ENCODE measurements at regions of chr2 and their contacts with region 1.

Region 1: DNA sequence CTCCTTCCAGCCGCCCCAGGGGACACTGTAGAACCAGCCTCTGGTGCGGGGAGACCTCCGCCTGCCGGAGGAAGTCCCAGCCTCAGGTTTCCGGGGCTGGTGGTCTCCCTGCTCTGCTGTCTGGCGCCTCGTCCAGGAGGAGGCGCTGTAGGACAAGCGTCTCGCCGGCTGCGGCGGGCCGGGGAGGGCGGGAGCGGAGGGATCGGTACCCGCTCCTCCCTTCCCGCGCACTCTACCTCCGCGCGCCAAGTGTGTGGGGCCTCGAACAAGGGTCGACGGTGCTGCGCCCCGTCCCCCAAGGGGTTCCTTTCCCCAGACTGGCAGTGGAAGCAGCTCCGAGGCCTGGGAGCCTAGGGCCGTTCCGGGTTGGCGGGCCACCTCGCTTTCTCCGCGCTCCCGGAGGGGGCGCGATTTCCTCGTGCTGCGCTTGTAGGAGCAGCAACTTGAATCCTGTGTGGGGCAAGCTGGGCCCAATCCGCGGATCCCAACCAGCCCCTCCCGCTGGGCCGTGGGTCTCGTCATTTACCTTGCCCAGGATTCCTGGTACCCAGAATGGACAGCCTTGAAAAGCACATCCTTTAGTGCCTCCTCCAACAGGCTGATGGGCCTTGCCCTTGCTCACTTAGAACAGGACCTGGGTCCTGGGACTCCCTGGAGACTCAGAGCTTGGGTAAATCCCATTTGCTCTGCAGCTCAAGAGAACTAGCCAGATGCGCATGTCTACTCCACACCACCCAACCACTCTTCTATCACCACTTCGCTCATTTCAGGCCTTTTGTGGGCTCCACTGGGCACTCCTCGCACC is 10.6 kb upstream of the HOXD4 start:
- DNase-seq: peak; percentile 82
- H3K4me3 ChIP-seq: peak overlapping the region; percentile 16 to 51 (median 39)
- H3K27ac ChIP-seq: peak overlapping the region; percentile 56
- H3K4me1 ChIP-seq: peaks cover 30% of the 10 kb centered on the region
- H3K27me3 ChIP-seq: no peaks in the 10 kb centered on the region
- CTCF ChIP-seq: peak; percentile 80 to 83
- POLR2A ChIP-seq: peak; percentile 58

Region 2: GRCh38 chr2:176126929-176127773 is 13.6 kb before region 1 on chr2:
- CTCF ChIA-PET with region 1: interaction called, 87 read pairs
- POLR2A ChIA-PET with region 1: no interaction called
- dilution Hi-C with region 1: no loop called
- intact Hi-C with region 1: loop called (anchors 1 kb)
- DNase-seq: peak; percentile 68
- H3K4me3 ChIP-seq: peak overlapping the region in 2 of 3 experiments; percentile 48 to 67
- H3K27ac ChIP-seq: no peak overlapping the region
- H3K4me1 ChIP-seq: peaks cover 33% of the 10 kb centered on the region
- H3K27me3 ChIP-seq: peaks cover 5 to 6% of the 10 kb centered on the region in 2 experiments
- CTCF ChIP-seq: peak; percentile 61 to 66
- POLR2A ChIP-seq: no peak

Region 3: DNA sequence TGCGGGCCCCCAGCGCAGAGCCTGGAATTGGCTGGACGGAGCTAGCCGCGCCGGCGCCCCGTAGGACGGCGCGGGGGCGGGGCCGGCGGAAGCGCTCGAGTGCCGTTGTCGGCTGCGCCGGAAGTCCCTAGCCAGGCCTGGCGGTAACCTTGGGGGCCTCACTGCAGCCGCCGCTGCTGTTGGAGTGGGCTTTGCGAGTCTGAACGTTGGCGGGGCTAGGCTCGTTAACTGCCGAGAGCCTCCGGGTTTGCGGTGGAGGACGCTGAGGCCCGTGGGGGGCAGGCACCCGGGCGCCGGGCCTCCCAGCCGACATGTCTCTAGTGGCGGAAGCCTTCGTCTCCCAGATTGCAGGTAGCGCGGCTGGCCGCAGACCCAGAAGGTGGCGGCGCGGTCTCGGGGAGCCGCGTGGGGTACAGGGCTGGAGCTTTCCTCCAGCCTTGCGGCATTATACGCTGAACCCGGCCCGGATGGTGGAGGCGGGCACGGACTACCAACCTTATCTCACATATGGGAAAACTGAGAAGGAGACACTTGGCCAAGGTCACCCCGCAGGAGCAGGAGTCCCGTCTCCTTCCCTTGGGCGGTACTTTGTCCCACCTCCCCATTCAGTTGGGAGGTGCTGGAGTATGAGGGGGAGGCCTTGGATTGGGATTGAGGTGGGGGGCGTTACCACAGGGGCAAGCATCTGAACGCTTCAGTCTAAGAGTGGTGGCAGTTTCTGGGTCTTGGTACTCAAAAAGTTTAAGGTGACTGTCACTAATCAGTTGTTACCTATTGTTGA is 128.8 kb after region 1 on chr2 and contains the start of gene MTX2:
- CTCF ChIA-PET with region 1: interaction called, 3 read pairs
- POLR2A ChIA-PET with region 1: no interaction called
- dilution Hi-C with region 1: no loop called
- intact Hi-C with region 1: loop called (anchors 2 kb)
- DNase-seq: peak; percentile 78
- H3K4me3 ChIP-seq: peak within 1 kb of the TSS; percentile 73 to 87 (median 77)
- H3K27ac ChIP-seq: peak within 1 kb of the TSS; percentile 77
- H3K4me1 ChIP-seq: peaks cover 8% of the 10 kb centered on the region
- H3K27me3 ChIP-seq: no peaks in the 10 kb centered on the region
- CTCF ChIP-seq: peak in 1 of 2 donors; percentile 10
- POLR2A ChIP-seq: peak; percentile 88
- total RNA-seq, gene MTX2: 31.3 and 31.7 TPM in 2 replicates

Region 4: DNA sequence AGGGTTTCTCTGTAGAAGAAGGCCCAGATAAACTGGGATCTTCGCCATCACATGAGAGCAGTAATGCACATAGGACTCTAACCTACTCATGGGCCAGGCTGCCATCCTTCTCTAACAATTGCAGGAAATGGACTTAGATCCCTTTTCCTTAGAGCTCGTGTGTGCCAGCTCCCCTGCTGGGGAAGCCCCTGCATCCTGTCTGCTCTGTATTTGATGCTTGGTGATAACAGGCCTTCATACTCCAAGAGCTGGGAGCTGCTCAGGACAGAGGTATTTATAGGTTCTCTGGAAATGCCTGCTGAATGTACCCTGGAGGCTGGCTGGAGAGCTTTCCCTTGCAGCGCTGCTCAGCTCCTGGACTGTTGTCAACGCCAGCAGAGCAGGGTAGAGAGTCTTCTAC is 378.1 kb after region 1 on chr2:
- CTCF ChIA-PET with region 1: interaction called, 8 read pairs
- POLR2A ChIA-PET with region 1: no interaction called
- dilution Hi-C with region 1: no loop called
- intact Hi-C with region 1: loop called (anchors 1 kb)
- DNase-seq: peak; percentile 98
- H3K4me3 ChIP-seq: no peak overlapping the region
- H3K27ac ChIP-seq: peak overlapping the region; percentile 64
- H3K4me1 ChIP-seq: peaks cover 36% of the 10 kb centered on the region
- H3K27me3 ChIP-seq: no peaks in the 10 kb centered on the region
- CTCF ChIP-seq: peak in 1 of 2 donors; percentile 12
- POLR2A ChIP-seq: peak; percentile 31

Region 5: DNA sequence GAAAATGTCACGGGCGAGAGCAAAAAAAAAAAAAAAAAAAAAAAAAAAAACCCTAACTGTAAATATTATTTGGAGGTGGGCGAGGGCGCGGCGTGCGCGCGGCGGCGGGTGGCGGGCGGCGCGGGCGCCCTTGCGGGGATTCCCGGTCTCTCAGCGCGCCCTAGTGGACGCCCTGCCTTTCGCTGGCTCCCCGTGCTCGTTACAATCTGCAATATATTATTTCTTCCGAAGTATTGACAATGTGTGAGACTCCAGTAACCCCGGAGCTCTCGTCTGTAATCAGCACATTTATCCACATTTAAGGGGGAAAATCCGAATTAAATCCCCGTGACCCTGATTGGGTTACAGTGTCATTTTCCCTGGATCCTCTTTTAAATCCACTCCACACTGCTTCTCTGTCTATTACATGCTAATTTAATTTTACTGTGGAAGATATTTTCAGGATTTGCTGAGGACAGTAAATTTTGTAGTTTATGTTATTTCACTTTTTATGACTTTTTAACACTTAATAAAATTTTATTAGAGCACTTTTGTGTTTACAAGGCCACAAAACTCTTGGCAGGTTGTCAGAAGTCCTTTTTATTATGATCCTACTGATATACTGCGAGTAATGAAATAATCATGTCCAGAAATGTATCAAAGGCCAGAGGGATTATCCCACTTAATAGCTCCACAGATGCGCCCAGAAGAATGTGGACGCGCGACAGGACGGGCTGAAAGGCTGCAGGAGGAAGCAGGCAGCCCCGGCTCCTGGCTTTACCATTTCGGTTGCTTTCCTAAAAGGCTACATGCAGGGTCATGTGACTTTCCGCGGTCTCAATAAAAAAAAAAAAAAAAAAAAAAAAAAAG is 497.7 kb after region 1 on chr2:
- CTCF ChIA-PET with region 1: interaction called, 140 read pairs
- POLR2A ChIA-PET with region 1: interaction called, 3 read pairs
- dilution Hi-C with region 1: loop called (anchors 25 kb)
- intact Hi-C with region 1: loop called (anchors 1 kb)
- DNase-seq: peak; percentile 74
- H3K4me3 ChIP-seq: peak overlapping the region; percentile 9 to 59 (median 55)
- H3K27ac ChIP-seq: peak overlapping the region; percentile 79
- H3K4me1 ChIP-seq: peaks cover 25% of the 10 kb centered on the region
- H3K27me3 ChIP-seq: no peaks in the 10 kb centered on the region
- CTCF ChIP-seq: peak; percentile 63 to 83
- POLR2A ChIP-seq: no peak

Region 6: GRCh38 chr2:177148477-177149154 is 1007.9 kb after region 1 on chr2:
- CTCF ChIA-PET with region 1: interaction called, 10 read pairs
- POLR2A ChIA-PET with region 1: no interaction called
- dilution Hi-C with region 1: no loop called
- intact Hi-C with region 1: no loop called
- DNase-seq: peak; percentile 85
- H3K4me3 ChIP-seq: peak overlapping the region in 2 of 3 experiments; percentile 29 to 62
- H3K27ac ChIP-seq: no peak overlapping the region
- H3K4me1 ChIP-seq: peaks cover 10% of the 10 kb centered on the region
- H3K27me3 ChIP-seq: peaks cover 9% of the 10 kb centered on the region in 2 experiments
- CTCF ChIP-seq: peak; percentile 87 to 89
- POLR2A ChIP-seq: no peak

Measured in endothelial cell of umbilical vein (primary cell).